Activated T-helper 2 cell treated with anti-CD3 and anti-CD28 coated beads, Interferon-gamma antibody, Interleukin-2, Interleukin-4, amounts not matched to agents 10 μg/mL and 5 μg/mL and 100 μg/mL, durations not matched to agents 14 hours and 24 hours and 36 hours (primary cell): ENCODE measurements at regions of chr1 and their contacts with region 1.

Region 1: DNA sequence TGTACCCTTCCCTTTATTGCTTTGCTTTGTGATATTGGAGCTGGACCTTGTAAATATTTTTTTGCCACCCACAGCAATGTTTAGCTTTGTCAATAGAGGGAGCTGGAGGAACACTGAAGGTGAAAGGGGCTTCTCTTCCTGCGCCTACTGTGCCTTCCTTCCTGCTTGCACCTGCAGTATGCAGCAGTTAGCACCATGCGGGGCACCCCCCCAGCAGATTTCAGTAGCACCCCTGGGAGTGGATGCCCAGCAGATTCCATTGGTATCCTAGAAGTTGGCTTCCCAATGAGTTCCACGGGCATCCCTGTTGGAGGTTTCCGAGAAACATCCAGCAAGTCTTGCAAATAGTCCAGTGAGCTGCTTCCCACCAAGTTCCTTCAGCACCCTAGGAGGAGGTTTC is 25.6 kb downstream of the S100A10 start:
- DNase-seq: peak; percentile 50
- H3K4me3 Mint-ChIP-seq: no peak overlapping the region
- H3K27ac Mint-ChIP-seq: no peak overlapping the region
- H3K4me1 Mint-ChIP-seq: peaks cover 28% of the 10 kb centered on the region
- H3K27me3 Mint-ChIP-seq: peaks cover 10% of the 10 kb centered on the region

Region 2: DNA sequence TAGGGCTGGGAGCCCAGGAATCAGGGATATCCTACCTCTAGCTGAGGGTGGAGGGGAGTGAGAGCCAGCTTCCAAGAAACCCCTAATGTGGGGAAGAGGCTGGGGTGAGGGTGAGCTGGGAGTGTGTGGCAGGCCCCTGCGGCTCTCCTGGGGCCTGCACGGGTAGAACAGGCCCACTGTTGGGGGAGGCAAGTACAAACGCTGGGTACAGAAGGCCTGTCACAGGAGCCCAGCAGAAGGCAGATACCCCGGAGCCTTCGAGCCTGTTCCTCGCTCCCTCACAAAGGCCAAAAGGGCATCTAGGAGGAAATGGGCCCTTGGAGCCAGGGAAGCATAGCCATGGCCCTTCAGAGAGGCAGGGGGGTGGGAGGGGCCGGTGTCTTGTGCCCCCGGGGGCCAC is 265.1 kb before region 1 on chr1:
- intact Hi-C with region 1: no loop called
- DNase-seq: no peak
- H3K4me3 Mint-ChIP-seq: no peak overlapping the region
- H3K27ac Mint-ChIP-seq: no peak overlapping the region
- H3K4me1 Mint-ChIP-seq: peaks cover 3% of the 10 kb centered on the region
- H3K27me3 Mint-ChIP-seq: no peaks in the 10 kb centered on the region

Region 3: DNA sequence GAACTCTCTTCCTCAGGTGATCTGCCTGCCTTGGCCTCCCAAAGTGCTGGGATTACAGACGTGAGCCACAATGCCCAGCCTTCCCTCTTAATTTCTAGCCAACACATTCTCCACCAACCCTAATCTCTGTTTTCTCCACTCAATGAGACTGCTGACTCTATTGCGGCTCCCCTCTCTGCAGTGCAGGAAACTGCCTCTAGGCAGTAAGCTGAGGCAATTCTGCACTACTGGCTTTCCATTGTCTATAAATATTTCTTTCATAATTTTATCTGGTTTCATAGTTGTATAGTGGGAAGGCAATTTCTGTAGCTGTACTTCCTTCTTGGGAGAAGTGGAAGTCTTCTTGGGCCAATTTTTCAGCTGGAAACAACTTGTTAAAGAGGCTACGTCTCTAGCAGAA is 214.9 kb before region 1 on chr1:
- intact Hi-C with region 1: no loop called
- DNase-seq: no peak
- H3K4me3 Mint-ChIP-seq: no peak overlapping the region
- H3K27ac Mint-ChIP-seq: no peak overlapping the region
- H3K4me1 Mint-ChIP-seq: peaks cover 5% of the 10 kb centered on the region
- H3K27me3 Mint-ChIP-seq: peaks cover 19% of the 10 kb centered on the region

Region 4: DNA sequence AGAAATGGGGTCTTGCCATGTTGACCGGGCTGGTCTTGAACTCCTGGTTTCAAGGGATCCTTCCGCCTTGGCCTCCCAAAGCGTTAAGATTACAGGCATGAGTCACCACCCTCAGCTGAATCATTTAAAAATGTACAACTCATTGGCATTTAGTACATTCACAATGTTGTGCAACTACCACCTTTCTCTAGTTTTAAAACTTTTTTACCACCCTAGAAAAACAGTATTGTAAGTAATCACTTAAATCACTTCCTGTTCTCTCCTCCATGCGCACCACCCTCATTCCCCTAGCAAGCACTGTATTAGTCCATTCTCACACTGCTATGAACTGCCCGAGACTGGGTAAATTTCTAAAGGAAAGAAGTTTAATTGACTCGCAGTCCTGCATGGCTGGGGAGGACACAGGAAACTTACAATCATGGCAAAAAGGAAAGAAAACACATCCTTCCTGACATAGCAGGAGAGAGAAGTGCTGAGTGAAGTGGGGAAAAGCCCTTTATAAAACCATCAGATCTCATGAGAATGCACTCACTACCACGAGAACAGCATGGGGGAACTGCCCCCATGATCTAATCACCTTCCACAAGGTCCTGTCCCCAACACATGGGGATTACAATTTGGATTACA is 100.2 kb before region 1 on chr1:
- intact Hi-C with region 1: no loop called
- DNase-seq: no peak
- H3K4me3 Mint-ChIP-seq: no peak overlapping the region
- H3K27ac Mint-ChIP-seq: no peak overlapping the region
- H3K4me1 Mint-ChIP-seq: peaks cover 5% of the 10 kb centered on the region
- H3K27me3 Mint-ChIP-seq: no peaks in the 10 kb centered on the region

Region 5: GRCh38 chr1:151934048-151934493 is 34.0 kb before region 1 on chr1:
- intact Hi-C with region 1: loop called (anchors 5 kb)
- DNase-seq: no peak
- H3K4me3 Mint-ChIP-seq: no peak overlapping the region
- H3K27ac Mint-ChIP-seq: no peak overlapping the region
- H3K4me1 Mint-ChIP-seq: peaks cover 3% of the 10 kb centered on the region
- H3K27me3 Mint-ChIP-seq: peaks cover 14% of the 10 kb centered on the region

Region 6: GRCh38 chr1:151945725-151946364 is 22.2 kb before region 1 on chr1:
- intact Hi-C with region 1: loop called (anchors 1 kb)
- DNase-seq: peak; percentile 81
- H3K4me3 Mint-ChIP-seq: peak overlapping the region; percentile 34
- H3K27ac Mint-ChIP-seq: peak overlapping the region; percentile 93
- H3K4me1 Mint-ChIP-seq: peaks cover 34% of the 10 kb centered on the region
- H3K27me3 Mint-ChIP-seq: no peaks in the 10 kb centered on the region

Region 7: GRCh38 chr1:151984313-151984956 is 16.4 kb after region 1 on chr1:
- intact Hi-C with region 1: loop called (anchors 2 kb)
- DNase-seq: peak; percentile 37
- H3K4me3 Mint-ChIP-seq: peak overlapping the region; percentile 15
- H3K27ac Mint-ChIP-seq: peak overlapping the region; percentile 80
- H3K4me1 Mint-ChIP-seq: peaks cover 65% of the 10 kb centered on the region
- H3K27me3 Mint-ChIP-seq: no peaks in the 10 kb centered on the region

Region 8: DNA sequence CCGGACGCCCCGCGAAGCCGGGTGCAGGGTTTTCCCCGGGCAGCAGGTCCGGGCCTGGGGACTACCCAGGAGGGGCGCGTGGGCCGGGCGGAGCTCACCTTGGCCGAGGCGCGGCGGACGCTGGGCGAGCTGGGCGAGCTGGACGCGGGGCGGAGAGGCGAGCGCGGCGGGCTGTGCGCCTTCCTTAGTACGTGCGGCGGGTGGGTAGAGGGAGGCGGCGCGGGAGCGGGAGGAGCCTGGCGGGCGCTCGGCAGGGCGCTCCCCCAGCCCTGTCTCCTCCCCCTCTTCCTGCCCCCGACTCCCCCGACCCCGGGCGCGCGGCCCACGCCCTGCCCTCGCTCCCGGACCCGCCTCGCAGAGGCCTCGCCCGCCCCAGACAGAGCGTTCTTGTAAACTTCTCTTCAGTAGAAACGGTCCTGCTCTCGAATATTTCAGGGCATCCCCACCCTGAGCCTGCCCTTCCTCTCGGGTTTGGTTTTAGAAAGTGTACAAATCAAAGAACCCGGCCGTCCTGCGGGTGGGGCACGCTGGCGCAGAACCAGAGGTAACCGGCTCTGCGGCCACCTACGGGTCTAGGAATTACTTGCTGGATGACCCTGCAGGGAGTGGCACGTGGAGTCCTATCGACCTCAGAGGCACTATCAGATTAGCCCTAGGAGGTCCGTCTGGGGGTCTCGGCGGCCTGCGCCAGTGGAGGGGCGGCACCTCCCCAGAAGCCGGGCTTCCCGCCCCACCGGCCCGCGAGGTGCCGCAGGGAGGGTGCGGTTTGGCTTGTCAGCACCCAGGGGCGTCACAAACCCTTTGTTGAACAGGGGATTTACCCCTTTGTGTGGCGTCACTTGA is 25.8 kb after region 1 on chr1 and contains the start of gene S100A10:
- intact Hi-C with region 1: loop called (anchors 1 kb)
- DNase-seq: peak; percentile 80
- H3K4me3 Mint-ChIP-seq: peak within 1 kb of the TSS; percentile 96
- H3K27ac Mint-ChIP-seq: peak within 1 kb of the TSS; percentile 96
- H3K4me1 Mint-ChIP-seq: peaks cover 48% of the 10 kb centered on the region
- H3K27me3 Mint-ChIP-seq: no peaks in the 10 kb centered on the region
- total RNA-seq, gene S100A10: 145 and 160 TPM in 2 replicates

Region 9: DNA sequence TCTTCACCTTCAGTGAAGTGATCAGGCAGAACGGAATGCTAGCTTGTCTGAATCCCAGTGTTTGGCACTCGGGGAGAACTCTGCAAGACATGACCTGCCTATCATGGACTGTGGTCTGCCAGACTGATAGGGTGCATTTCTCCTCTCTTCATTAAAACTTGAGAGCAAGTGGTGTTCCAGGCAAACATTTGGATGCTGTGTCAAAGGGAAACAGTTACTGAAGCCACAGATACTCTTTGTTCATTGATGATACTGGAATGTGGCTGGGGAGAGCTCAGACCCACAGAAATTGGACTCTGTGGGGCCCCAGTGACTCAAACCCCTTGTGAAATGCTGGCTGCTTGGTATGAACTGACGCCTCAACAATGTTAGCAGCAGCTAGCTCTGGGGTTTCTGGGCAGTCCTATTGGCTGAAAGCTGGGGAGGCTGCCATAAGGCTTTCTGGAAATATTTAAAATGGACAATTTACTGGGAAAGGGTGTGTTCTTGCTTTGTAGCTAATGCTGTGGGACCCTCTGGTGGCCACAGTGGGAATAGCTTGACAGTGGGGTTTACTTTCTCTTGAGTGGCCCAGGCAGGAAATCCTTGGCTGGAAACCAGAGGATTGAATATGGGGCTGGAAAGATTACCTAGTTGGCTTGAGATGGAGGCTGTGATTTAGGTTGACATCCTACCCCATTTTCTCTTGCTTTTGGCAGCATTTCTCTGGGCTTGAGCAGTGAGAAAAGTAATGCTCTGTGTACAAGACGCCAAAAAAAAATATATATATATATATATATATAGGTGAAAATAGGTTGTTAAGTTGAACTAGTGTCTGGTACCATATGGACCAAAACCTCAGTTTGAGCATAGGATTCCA is 33.6 kb after region 1 on chr1:
- intact Hi-C with region 1: loop called (anchors 1 kb)
- DNase-seq: peak; percentile 60
- H3K4me3 Mint-ChIP-seq: no peak overlapping the region
- H3K27ac Mint-ChIP-seq: no peak overlapping the region
- H3K4me1 Mint-ChIP-seq: peaks cover 17% of the 10 kb centered on the region
- H3K27me3 Mint-ChIP-seq: peaks cover 30% of the 10 kb centered on the region

Region 10: GRCh38 chr1:152013664-152014237 is 45.7 kb after region 1 on chr1:
- intact Hi-C with region 1: loop called (anchors 1 kb)
- DNase-seq: peak; percentile 38
- H3K4me3 Mint-ChIP-seq: no peak overlapping the region
- H3K27ac Mint-ChIP-seq: no peak overlapping the region
- H3K4me1 Mint-ChIP-seq: peaks cover 7% of the 10 kb centered on the region
- H3K27me3 Mint-ChIP-seq: peaks cover 35% of the 10 kb centered on the region

Region 11: DNA sequence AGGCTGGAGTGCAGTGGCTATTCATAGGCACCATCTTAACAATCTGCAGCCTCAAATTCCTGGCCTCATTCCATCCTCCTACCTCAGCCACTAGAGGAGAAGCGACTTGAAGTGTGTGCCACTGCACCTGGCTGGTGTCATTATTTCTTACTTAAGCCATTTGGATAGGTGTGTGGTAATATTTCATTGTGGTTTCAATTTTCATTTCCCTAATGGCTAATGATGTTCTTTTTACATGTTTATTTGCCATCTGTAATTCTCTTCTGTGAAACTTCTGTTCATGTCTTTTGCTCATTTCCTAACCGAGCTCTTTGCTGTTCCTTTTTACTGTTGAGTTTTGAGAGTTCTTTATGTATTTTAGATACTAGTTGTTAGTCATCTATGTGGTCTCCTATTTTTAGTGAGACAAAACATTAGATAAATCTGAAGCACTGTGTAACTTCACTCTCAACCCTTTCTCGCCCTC is 1874.0 kb after region 1 on chr1:
- intact Hi-C with region 1: no loop called
- DNase-seq: no peak
- H3K4me3 Mint-ChIP-seq: no peak overlapping the region
- H3K27ac Mint-ChIP-seq: no peak overlapping the region
- H3K4me1 Mint-ChIP-seq: peaks cover 9% of the 10 kb centered on the region
- H3K27me3 Mint-ChIP-seq: no peaks in the 10 kb centered on the region